ENCODE measurements at regions of chr4 and their contacts with region 1.

Region 1: GRCh38 chr4:66628146-66628545 is 917.2 kb downstream of the CENPC start:
- DNase-seq: no peak
- H3K4me3 ChIP-seq: no peak overlapping the region
- H3K27ac ChIP-seq: no peak overlapping the region
- H3K4me1 ChIP-seq: no peaks in the 10 kb centered on the region
- H3K27me3 ChIP-seq: no peaks in the 10 kb centered on the region
- CTCF ChIP-seq: no peak
- EP300 ChIP-seq: no peak
- POLR2A ChIP-seq: no peak

Region 2: GRCh38 chr4:68018546-68018945 is 1390.4 kb after region 1 on chr4:
- intact Hi-C with region 1: loop called in 1 of 4 experiments (anchors 5 kb)
- DNase-seq: no peak
- H3K4me3 ChIP-seq: no peak overlapping the region
- H3K27ac ChIP-seq: no peak overlapping the region
- H3K4me1 ChIP-seq: no peaks in the 10 kb centered on the region
- H3K27me3 ChIP-seq: no peaks in the 10 kb centered on the region
- CTCF ChIP-seq: no peak
- EP300 ChIP-seq: no peak
- POLR2A ChIP-seq: no peak

Measured in ovary (tissue), 10 donors.